ENCODE measurements at regions of chr16 and their contacts with region 1.

Region 1: GRCh38 chr16:22374311-22375116 is at the start of gene CDR2:
- DNase-seq: peak; percentile 96 to 99 (median 97)
- ATAC-seq: peak; percentile 91
- H3K4me3 ChIP-seq: peak within 1 kb of the TSS; percentile 91
- H3K4me3 Mint-ChIP-seq: peak within 1 kb of the TSS; percentile 99
- H3K27ac ChIP-seq: peak within 1 kb of the TSS; percentile 31 to 83
- H3K27ac Mint-ChIP-seq: peak within 1 kb of the TSS; percentile 97
- H3K4me1 ChIP-seq: peaks cover 26% of the 10 kb centered on the region
- H3K4me1 Mint-ChIP-seq: peaks cover 56% of the 10 kb centered on the region
- H3K27me3 ChIP-seq: no peaks in the 10 kb centered on the region
- H3K27me3 Mint-ChIP-seq: no peaks in the 10 kb centered on the region
- CTCF ChIP-seq: no peak
- total RNA-seq, gene CDR2: 104 to 113 TPM

Region 2: GRCh38 chr16:22206013-22206841 is 168.3 kb before region 1 on chr16 and contains the start of gene EEF2K:
- CTCF ChIA-PET with region 1: no interaction called
- POLR2A ChIA-PET with region 1: no interaction called
- intact Hi-C with region 1: loop called in 1 of 2 experiments (anchors 5 kb)
- DNase-seq: peak; percentile 60 to 92 (median 76)
- ATAC-seq: peak; percentile 91
- H3K4me3 ChIP-seq: peak within 1 kb of the TSS; percentile 85
- H3K4me3 Mint-ChIP-seq: peak within 1 kb of the TSS; percentile 96
- H3K27ac ChIP-seq: peak within 1 kb of the TSS in 1 of 2 donors; percentile 51
- H3K27ac Mint-ChIP-seq: peak within 1 kb of the TSS; percentile 79
- H3K4me1 ChIP-seq: peaks cover 26% of the 10 kb centered on the region
- H3K4me1 Mint-ChIP-seq: peaks cover 36% of the 10 kb centered on the region
- H3K27me3 ChIP-seq: no peaks in the 10 kb centered on the region
- H3K27me3 Mint-ChIP-seq: no peaks in the 10 kb centered on the region
- CTCF ChIP-seq: peak; percentile 81
- total RNA-seq, gene EEF2K: 10.1 to 13.2 TPM

Region 3: GRCh38 chr16:22272870-22273595 is 101.5 kb before region 1 on chr16:
- CTCF ChIA-PET with region 1: no interaction called
- POLR2A ChIA-PET with region 1: no interaction called
- intact Hi-C with region 1: no loop called
- DNase-seq: no peak
- ATAC-seq: no peak
- H3K4me3 ChIP-seq: no peak overlapping the region
- H3K4me3 Mint-ChIP-seq: no peak overlapping the region
- H3K27ac ChIP-seq: no peak overlapping the region
- H3K27ac Mint-ChIP-seq: no peak overlapping the region
- H3K4me1 ChIP-seq: no peaks in the 10 kb centered on the region
- H3K4me1 Mint-ChIP-seq: no peaks in the 10 kb centered on the region
- H3K27me3 ChIP-seq: no peaks in the 10 kb centered on the region
- H3K27me3 Mint-ChIP-seq: no peaks in the 10 kb centered on the region
- CTCF ChIP-seq: no peak

Region 4: DNA sequence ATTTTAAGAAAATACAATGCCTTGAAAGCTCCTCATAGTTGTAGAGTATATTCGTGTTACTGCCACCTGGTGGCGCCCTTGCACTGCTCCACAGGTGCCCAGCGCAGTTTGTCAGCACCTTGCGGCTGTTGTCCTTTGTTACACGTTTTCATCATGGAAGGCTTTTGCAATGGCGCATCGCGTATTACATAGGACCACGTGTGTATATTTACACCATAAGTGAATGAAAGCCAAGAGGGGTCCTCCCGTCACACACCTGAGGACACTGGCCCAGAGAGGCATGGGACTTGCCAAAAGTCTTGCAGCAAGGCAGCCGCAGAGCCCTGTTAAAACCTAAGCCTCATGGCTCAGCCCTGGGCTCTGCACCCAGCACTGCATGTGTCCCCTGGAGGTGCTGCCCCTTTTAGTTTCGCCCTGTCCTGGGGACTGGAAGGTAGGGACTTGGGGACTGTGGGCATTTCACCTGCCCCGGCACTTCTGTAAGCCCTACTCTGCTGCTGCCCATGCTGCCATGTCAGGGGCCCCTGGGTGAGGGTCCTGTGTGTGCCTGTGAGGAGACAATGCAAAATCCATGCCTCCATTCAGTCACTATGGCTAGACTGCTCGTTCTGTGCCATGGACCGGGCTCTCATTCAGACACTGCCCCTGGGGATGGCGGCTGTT is 53.0 kb before region 1 on chr16:
- CTCF ChIA-PET with region 1: interaction called, 10 read pairs
- POLR2A ChIA-PET with region 1: interaction called, 10 read pairs
- intact Hi-C with region 1: loop called (anchors 2 to 5 kb)
- DNase-seq: peak; percentile 54 to 89 (median 69)
- ATAC-seq: peak; percentile 81
- H3K4me3 ChIP-seq: no peak overlapping the region
- H3K4me3 Mint-ChIP-seq: no peak overlapping the region
- H3K27ac ChIP-seq: no peak overlapping the region
- H3K27ac Mint-ChIP-seq: peak overlapping the region; percentile 82
- H3K4me1 ChIP-seq: peaks cover 10% of the 10 kb centered on the region
- H3K4me1 Mint-ChIP-seq: peaks cover 11% of the 10 kb centered on the region
- H3K27me3 ChIP-seq: no peaks in the 10 kb centered on the region
- H3K27me3 Mint-ChIP-seq: no peaks in the 10 kb centered on the region
- CTCF ChIP-seq: peak; percentile 99

Region 5: DNA sequence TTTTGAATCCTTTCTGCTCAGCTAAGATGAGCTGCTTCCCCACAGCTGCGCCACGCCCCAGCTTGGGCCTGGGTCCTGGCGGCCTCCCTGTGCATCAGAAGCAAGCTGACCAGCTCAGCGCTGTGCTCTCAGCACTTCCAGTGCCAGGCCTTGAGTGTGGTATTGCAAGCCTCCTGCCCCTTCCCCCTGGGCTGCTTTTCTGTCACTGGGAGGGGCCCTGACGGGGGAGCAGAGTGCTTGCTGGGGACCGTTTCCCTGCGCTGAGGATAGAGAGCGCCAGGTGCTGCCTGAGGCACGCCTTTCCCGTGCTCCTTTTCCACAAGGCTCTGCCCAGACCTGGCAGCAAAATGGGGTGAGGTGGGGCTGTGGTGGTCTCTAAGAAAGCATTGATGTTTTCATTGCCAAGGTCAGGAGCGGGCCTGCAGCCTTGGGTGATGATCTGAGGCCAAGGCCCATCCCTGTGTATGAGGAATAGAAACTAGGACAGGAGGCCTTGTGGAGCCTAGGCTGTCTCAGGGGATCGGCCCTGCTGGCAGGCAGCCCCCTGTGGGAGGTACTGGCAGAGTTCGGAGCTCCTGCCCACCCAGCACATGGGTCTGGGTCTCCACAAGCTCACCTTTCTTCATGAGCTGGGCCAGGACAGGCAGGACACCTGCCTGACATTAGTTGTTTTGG is 47.6 kb before region 1 on chr16:
- CTCF ChIA-PET with region 1: interaction called, 10 read pairs
- POLR2A ChIA-PET with region 1: interaction called, 21 read pairs
- intact Hi-C with region 1: loop called in 1 of 2 experiments (anchors 5 kb)
- DNase-seq: peak in 1 of 14 experiments; percentile 9
- ATAC-seq: no peak
- H3K4me3 ChIP-seq: no peak overlapping the region
- H3K4me3 Mint-ChIP-seq: no peak overlapping the region
- H3K27ac ChIP-seq: no peak overlapping the region
- H3K27ac Mint-ChIP-seq: peak overlapping the region; percentile 30
- H3K4me1 ChIP-seq: peaks cover 7% of the 10 kb centered on the region
- H3K4me1 Mint-ChIP-seq: peaks cover 19% of the 10 kb centered on the region
- H3K27me3 ChIP-seq: no peaks in the 10 kb centered on the region
- H3K27me3 Mint-ChIP-seq: no peaks in the 10 kb centered on the region
- CTCF ChIP-seq: no peak

Region 6: DNA sequence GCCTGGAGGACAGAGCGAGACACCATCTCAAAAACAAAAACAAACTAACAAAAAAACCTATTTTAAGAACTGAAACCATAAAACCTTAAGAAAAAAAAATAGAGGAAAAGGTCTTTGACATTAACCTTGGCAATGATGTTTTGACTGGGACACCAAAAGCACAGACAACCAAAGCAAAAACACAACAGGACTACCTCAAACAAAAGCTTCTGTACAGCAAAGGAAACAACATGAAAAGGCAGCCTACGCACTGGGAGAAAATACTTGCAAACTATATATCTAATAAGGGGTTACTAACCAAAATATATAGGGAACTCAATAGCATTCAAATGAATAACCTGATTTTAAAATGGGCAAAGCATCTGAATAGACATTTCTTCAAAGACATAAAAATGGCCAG is 32.4 kb before region 1 on chr16:
- CTCF ChIA-PET with region 1: interaction called, 3 read pairs
- POLR2A ChIA-PET with region 1: interaction called, 10 read pairs
- intact Hi-C with region 1: loop called in 1 of 2 experiments (anchors 2 kb)
- DNase-seq: no peak
- ATAC-seq: peak; percentile 79
- H3K4me3 ChIP-seq: no peak overlapping the region
- H3K4me3 Mint-ChIP-seq: no peak overlapping the region
- H3K27ac ChIP-seq: no peak overlapping the region
- H3K27ac Mint-ChIP-seq: peak overlapping the region; percentile 85
- H3K4me1 ChIP-seq: no peaks in the 10 kb centered on the region
- H3K4me1 Mint-ChIP-seq: peaks cover 50% of the 10 kb centered on the region
- H3K27me3 ChIP-seq: no peaks in the 10 kb centered on the region
- H3K27me3 Mint-ChIP-seq: no peaks in the 10 kb centered on the region
- CTCF ChIP-seq: no peak

Region 7: GRCh38 chr16:22353191-22353919 is 21.2 kb before region 1 on chr16:
- CTCF ChIA-PET with region 1: interaction called, 5 read pairs
- POLR2A ChIA-PET with region 1: interaction called, 327 read pairs
- intact Hi-C with region 1: loop called (anchors 1 to 2 kb)
- DNase-seq: peak in 5 of 14 experiments; percentile 5 to 71 (median 37)
- ATAC-seq: peak; percentile 16
- H3K4me3 ChIP-seq: no peak overlapping the region
- H3K4me3 Mint-ChIP-seq: peak overlapping the region; percentile 39
- H3K27ac ChIP-seq: peak overlapping the region; percentile 38 to 53
- H3K27ac Mint-ChIP-seq: peak overlapping the region; percentile 85
- H3K4me1 ChIP-seq: peaks cover 38% of the 10 kb centered on the region
- H3K4me1 Mint-ChIP-seq: peaks cover 65% of the 10 kb centered on the region
- H3K27me3 ChIP-seq: no peaks in the 10 kb centered on the region
- H3K27me3 Mint-ChIP-seq: no peaks in the 10 kb centered on the region
- CTCF ChIP-seq: no peak

Region 8: GRCh38 chr16:22424161-22424937 is 49.8 kb after region 1 on chr16:
- CTCF ChIA-PET with region 1: no interaction called
- POLR2A ChIA-PET with region 1: no interaction called
- intact Hi-C with region 1: loop called in 1 of 2 experiments (anchors 10 kb)
- DNase-seq: no peak
- ATAC-seq: no peak
- H3K4me3 ChIP-seq: no peak overlapping the region
- H3K4me3 Mint-ChIP-seq: no peak overlapping the region
- H3K27ac ChIP-seq: no peak overlapping the region
- H3K27ac Mint-ChIP-seq: peak overlapping the region; percentile 4
- H3K4me1 ChIP-seq: no peaks in the 10 kb centered on the region
- H3K4me1 Mint-ChIP-seq: peaks cover 5% of the 10 kb centered on the region
- H3K27me3 ChIP-seq: no peaks in the 10 kb centered on the region
- H3K27me3 Mint-ChIP-seq: no peaks in the 10 kb centered on the region
- CTCF ChIP-seq: no peak